ENCODE measurements at regions of chr21 and their contacts with region 1.

Region 1: GRCh38 chr21:39818557-39819325 is 48.5 kb upstream of the PCP4 start:
- DNase-seq: no peak

Region 2: GRCh38 chr21:39696618-39697017 is 122.1 kb before region 1 on chr21:
- intact Hi-C with region 1: no loop called
- DNase-seq: no peak

Region 3: DNA sequence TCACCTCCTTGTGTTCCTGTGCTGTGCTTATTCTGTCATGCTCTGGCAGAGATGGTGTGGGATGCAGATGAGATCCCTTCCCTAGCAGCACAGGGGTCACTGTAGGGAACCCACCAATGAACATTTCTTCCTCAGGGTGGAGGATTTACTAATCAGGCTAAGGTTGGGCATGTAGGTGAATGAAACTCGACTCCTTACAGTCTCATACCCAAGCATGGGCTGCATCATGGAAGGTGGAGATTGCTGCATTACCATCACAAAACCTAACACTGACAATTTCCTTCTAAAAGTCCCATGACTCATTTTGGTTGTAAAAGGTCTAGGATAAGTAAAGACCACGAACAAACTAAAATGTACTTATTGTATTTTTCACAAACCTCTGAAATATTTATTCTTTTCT is 628.3 kb after region 1 on chr21:
- intact Hi-C with region 1: no loop called
- DNase-seq: no peak

Region 4: DNA sequence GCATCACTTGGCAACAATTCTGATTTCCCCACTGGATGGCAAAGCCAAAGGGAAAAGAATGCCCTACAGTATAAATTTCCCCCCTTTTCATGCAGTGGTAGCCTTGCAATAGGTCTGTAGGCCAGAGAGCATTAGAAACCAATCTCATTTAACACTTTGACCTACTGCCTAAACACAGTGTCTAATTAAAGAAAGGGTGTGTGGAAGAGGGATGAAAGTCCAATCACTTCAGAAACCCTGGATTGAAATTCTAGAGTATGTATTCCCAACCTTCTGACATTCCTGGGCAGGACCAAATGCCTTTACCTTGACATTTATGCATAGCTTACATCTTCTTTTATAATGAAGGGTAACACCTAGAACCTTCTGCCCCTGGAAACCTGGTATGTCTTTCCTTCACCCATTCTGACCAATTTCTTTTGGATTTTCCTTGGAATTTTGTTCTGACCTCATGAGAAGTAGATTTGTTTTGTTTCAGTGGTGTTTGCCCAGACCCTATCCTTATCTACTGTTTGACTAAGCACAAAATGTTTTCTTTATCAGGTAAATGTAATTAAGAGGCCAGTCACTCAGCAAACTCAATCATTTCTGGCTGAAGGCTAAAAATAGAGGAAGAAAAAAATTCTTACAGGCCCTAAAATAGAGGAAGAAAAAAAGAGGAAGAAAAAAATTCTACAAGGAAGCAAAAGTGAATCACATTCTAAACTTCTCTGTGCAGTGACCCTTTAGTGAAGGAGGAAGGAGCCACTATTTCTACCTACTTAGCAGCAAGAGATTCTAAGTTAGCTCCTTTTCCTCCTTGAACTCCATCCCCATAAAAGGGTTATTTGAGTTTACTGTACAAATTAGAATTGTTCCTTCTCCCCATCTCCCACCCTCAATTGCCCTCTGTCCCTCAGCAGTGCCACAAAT is 1157.7 kb after region 1 on chr21:
- intact Hi-C with region 1: loop called (anchors 10 kb)
- DNase-seq: no peak